HCT116 (cell line): ENCODE measurements at regions of chr17 and their contacts with region 1.

Region 1: GRCh38 chr17:57084802-57085447 is at the start of gene AKAP1:
- DNase-seq: peak; percentile 91
- ATAC-seq: peak; percentile 94
- H3K4me3 ChIP-seq: peak within 1 kb of the TSS; percentile 82 to 89
- H3K27ac ChIP-seq: peak within 1 kb of the TSS; percentile 82
- H3K4me1 ChIP-seq: peaks cover 7 to 26% of the 10 kb centered on the region in 2 experiments; a peak in 3 of 4 replicates
- H3K27me3 ChIP-seq: no peaks in the 10 kb centered on the region
- CTCF ChIP-seq: peak in 1 of 3 experiments; percentile 22; a peak in 1 of 6 replicates
- POLR2A ChIP-seq: peak; percentile 82
- RAD21 ChIP-seq: no peak
- total RNA-seq, gene AKAP1: 51.6 TPM

Region 2: GRCh38 chr17:56833809-56834379 is 251.0 kb before region 1 on chr17 and contains the starts of genes C17orf67 and DGKE:
- CTCF ChIA-PET with region 1: no interaction called
- POLR2A ChIA-PET with region 1: no interaction called
- RAD21 ChIA-PET with region 1: no interaction called
- intact Hi-C with region 1: loop called (anchors 10 kb)
- DNase-seq: peak; percentile 88
- ATAC-seq: peak; percentile 96
- H3K4me3 ChIP-seq: peak within 1 kb of the TSS; percentile 63 to 65
- H3K27ac ChIP-seq: peak within 1 kb of the TSS; percentile 74
- H3K4me1 ChIP-seq: peaks cover 9 to 21% of the 10 kb centered on the region in 2 experiments
- H3K27me3 ChIP-seq: no peaks in the 10 kb centered on the region
- CTCF ChIP-seq: no peak
- POLR2A ChIP-seq: no peak
- RAD21 ChIP-seq: no peak
- total RNA-seq, gene C17orf67: 0.84 TPM
- total RNA-seq, gene DGKE: 5.2 TPM

Region 3: GRCh38 chr17:57106107-57106835 is 21.3 kb after region 1 on chr17:
- CTCF ChIA-PET with region 1: interaction called, 19 read pairs
- POLR2A ChIA-PET with region 1: interaction called, 17 read pairs
- RAD21 ChIA-PET with region 1: interaction called in 1 of 2 experiments, 3 read pairs
- intact Hi-C with region 1: loop called (anchors 1 kb)
- DNase-seq: peak; percentile 64
- ATAC-seq: peak; percentile 71
- H3K4me3 ChIP-seq: peak overlapping the region in 1 of 2 experiments; percentile 52; a peak in 1 of 4 replicates
- H3K27ac ChIP-seq: peak overlapping the region; percentile 89
- H3K4me1 ChIP-seq: peaks cover 63 to 71% of the 10 kb centered on the region in 2 experiments
- H3K27me3 ChIP-seq: no peaks in the 10 kb centered on the region
- CTCF ChIP-seq: peak; percentile 61 to 96 (median 81); a peak in 5 of 6 replicates
- POLR2A ChIP-seq: no peak
- RAD21 ChIP-seq: peak; percentile 61

Region 4: DNA sequence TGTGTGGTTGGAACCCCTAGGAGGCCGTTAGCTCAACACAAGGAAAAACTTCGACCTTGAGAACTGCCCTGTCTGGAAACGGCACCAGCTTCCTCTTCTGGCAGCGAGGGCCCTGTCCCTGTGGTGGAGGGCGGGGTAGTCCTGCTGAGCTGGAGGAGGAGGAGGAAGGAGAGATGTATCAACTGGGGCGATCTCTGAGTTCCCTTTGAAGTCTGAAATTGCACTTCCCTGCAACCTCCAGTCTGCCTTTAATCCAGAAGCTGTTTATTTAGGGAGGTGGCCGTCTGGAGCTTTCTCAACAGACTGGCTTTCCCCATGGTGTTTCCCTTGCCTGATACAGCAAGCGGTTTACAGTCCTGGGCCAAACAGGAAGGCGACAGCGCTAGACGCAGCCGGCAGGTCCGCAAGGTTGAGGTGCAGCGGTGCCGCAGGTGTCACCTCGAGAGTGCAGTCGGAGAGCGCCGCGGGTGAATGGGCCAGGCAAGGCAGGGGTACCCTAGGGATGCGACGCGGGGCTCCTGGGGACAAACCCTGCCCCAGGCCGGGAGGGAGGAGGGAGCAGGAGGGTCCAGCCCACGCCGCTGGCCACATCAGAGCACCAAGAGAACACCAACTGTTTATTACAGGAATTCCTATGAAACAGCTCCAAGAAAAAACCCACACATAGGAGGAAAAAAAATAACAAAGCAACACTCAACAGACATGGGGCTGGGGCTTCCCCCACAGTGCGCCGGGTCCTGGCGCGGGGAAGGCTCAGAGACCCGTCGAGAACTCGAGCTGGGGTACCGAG is 776.3 kb after region 1 on chr17:
- CTCF ChIA-PET with region 1: no interaction called
- POLR2A ChIA-PET with region 1: no interaction called
- RAD21 ChIA-PET with region 1: no interaction called
- intact Hi-C with region 1: no loop called
- DNase-seq: peak; percentile 75
- ATAC-seq: peak; percentile 68
- H3K4me3 ChIP-seq: peak overlapping the region; percentile 38 to 51
- H3K27ac ChIP-seq: peak overlapping the region; percentile 79
- H3K4me1 ChIP-seq: peaks cover 54 to 80% of the 10 kb centered on the region in 2 experiments
- H3K27me3 ChIP-seq: no peaks in the 10 kb centered on the region
- CTCF ChIP-seq: 0 out of 6 replicates have a peak, but pooled peaks of 1 of the 3 experiments have one; percentile 5
- POLR2A ChIP-seq: no peak
- RAD21 ChIP-seq: no peak